Dendritic cell treated with granulocyte-macrophage colony-stimulating factor and Interleukin-4, amounts not matched to agents 40 ng/mL and 50 ng/mL, for 4 days (primary cell): ENCODE measurements at regions of chr5 and their contacts with region 1.

Region 1: DNA sequence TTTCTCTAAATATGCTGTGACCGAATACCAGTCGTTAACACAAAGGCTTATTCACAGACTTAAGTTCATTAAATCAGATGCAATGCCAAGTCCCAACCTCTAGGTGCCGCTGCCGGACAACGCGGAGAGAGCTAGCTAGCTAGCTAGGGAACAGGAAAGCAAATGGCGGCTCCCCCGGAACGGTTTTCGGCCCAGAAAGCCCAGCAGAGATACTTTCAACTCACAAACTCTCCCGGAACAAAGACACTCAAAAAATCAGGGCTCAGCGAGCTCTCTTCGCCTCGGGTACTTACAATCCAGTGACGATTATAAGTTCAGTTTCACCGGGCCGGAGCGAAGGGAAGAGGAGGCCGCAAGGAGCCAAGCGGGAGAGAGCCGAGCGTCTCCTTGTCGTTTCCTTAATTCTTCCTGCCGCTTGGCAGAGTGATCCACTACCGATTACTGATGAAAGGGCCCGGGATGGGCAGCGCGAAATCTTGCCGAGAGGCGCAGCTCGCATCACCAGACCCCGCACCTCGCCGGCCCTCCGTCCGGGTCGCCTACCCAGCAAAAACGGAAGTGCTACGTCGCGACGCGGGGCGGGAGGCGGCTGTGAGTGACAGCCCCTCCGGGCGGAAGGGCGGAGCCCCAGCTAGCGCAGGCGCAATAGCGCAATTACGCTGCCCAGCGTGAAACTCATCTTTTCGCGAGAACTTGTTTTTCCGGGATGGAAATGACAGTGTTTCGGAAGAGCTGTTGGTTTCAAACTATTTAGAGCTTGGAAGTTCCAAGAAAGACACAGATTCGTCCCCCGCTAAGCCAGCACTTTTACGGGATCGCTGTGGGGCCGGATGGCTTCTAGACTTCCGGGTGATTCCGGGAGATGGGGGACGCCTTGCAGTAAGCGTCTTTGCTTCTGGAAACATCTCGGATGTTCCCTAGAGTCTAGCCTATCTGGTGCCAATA is at the start of gene TAF7:
- H3K4me3 Mint-ChIP-seq: peak within 1 kb of the TSS; percentile 99
- H3K27ac Mint-ChIP-seq: peak within 1 kb of the TSS; percentile 100
- H3K4me1 Mint-ChIP-seq: peaks cover 13% of the 10 kb centered on the region
- H3K27me3 Mint-ChIP-seq: peaks cover 6% of the 10 kb centered on the region

Region 2: DNA sequence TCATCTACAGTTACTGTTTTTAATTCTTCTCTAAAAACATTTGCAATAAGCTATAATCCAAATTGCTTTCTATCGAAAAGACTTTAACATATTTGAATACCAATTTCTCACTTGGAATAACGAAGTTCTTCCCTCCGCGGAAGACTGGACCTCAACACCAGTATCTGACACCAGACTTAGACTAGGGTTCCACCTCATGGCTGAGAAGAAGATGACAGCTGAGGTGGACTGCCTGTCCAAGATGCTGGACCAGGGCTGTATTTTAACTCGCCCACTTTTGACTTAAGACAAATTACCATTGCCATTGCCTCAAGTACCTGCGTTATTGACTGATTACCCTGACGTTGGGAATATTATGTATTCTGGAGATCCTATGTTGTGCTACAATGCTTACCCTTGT is 586.1 kb before region 1 on chr5:
- intact Hi-C with region 1: no loop called
- H3K4me3 Mint-ChIP-seq: no peak overlapping the region
- H3K27ac Mint-ChIP-seq: no peak overlapping the region
- H3K4me1 Mint-ChIP-seq: no peaks in the 10 kb centered on the region
- H3K27me3 Mint-ChIP-seq: peaks cover 11% of the 10 kb centered on the region

Region 3: DNA sequence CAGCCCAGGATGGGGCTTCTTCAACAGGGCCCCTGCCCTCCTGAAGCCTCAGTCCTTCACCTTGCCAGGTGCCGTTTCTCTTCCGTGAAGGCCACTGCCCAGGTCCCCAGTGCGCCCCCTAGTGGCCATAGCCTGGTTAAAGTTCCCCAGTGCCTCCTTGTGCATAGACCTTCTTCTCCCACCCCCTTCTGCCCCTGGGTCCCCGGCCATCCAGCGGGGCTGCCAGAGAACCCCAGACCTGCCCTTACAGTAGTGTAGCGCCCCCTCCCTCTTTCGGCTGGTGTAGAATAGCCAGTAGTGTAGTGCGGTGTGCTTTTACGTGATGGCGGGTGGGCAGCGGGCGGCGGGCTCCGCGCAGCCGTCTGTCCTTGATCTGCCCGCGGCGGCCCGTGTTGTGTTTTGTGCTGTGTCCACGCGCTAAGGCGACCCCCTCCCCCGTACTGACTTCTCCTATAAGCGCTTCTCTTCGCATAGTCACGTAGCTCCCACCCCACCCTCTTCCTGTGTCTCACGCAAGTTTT is 192.0 kb after region 1 on chr5:
- intact Hi-C with region 1: loop called (anchors 10 kb)
- H3K4me3 Mint-ChIP-seq: peak overlapping the region; percentile 74
- H3K27ac Mint-ChIP-seq: peak overlapping the region; percentile 55
- H3K4me1 Mint-ChIP-seq: peaks cover 75% of the 10 kb centered on the region
- H3K27me3 Mint-ChIP-seq: peaks cover 24% of the 10 kb centered on the region